Activated naive CD4-positive, alpha-beta T cell treated with anti-CD3 and anti-CD28 coated beads for 36 hours (primary cell): ENCODE measurements at regions of chr6 and their contacts with region 1.

Region 1: GRCh38 chr6:31575335-31575901 is at the start of gene TNF:
- DNase-seq: peak; percentile 87
- H3K4me3 Mint-ChIP-seq: peak within 1 kb of the TSS; percentile 94
- H3K27ac Mint-ChIP-seq: peak within 1 kb of the TSS; percentile 97
- H3K4me1 Mint-ChIP-seq: peaks cover 65% of the 10 kb centered on the region
- H3K27me3 Mint-ChIP-seq: no peaks in the 10 kb centered on the region
- total RNA-seq, gene TNF: 31.6 to 33.2 TPM

Region 2: DNA sequence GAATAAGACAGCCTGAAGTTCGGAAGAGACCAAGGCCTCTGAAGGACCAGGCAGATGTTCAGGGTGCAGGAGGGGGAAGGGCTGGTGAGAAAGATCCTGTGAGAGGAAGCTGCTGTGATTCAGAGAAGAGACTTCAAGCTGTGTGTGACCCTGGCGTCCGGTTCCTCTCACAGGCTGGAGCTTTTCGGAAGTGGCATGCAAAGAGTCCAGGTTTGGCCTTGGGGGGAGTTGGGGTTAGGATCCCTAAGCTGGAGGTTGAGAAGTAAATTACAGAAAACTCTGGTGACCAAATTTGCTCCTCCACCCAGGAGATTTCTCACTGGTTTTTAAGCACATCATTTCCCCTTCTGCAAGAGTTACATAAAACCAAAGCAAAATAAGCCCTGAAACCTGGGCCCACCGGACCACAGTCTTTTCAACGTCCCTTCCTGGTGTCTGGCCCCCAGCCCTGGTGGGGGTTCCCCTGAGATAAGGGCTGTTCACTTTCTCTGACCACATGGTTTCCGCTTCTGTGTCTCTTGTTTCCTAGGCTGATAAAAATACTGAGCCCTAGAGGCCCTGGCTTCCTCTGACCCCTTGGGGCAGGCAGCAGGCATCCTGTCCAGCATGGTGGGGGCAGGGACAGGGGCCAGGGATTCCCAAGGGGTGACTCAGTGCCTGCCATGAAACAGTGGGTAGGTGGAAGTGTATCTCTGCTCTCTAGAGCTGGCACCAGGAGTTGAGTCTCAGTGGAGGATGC is 15.3 kb before region 1 on chr6:
- CTCF ChIA-PET with region 1: interaction called, 442 read pairs
- intact Hi-C with region 1: loop called (anchors 1 kb)
- DNase-seq: peak; percentile 85
- H3K4me3 Mint-ChIP-seq: peak overlapping the region; percentile 60
- H3K27ac Mint-ChIP-seq: peak overlapping the region; percentile 92
- H3K4me1 Mint-ChIP-seq: peaks cover 80% of the 10 kb centered on the region
- H3K27me3 Mint-ChIP-seq: no peaks in the 10 kb centered on the region